Tibial artery (tissue), 4 donors: ENCODE measurements at regions of chr15 and their contacts with region 1.

Region 1: DNA sequence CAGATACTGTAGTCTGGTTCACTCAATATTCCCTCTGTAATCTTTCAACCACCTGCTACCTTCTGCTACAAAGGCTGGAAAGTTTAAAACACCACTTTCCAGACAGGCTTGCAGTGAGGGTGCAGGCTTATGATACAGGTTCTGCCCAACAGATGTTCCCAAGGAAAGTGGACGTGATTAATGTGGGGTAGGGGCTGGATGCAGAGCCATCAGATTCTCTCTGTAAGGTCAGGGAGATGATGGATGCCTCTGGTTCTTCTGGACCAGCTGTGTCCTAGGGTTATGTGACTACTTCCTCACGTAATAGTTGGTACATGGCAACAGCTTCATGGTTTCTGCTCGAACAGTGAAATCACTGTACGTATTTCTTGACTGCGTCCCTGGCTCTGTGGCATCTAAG is 11.1 kb downstream of the GPR176 start:
- DNase-seq: no peak
- H3K4me3 ChIP-seq: no peak overlapping the region
- H3K27ac ChIP-seq: no peak overlapping the region
- H3K4me1 ChIP-seq: peaks cover 0 to 6% (median 0%) of the 10 kb centered on the region in 4 donors
- H3K27me3 ChIP-seq: no peaks in the 10 kb centered on the region
- CTCF ChIP-seq: no peak

Region 2: GRCh38 chr15:39885099-39885777 is 23.8 kb before region 1 on chr15:
- intact Hi-C with region 1: loop called (anchors 1 kb)
- DNase-seq: no peak
- H3K4me3 ChIP-seq: no peak overlapping the region
- H3K27ac ChIP-seq: no peak overlapping the region
- H3K4me1 ChIP-seq: peaks cover 0 to 12% (median 3%) of the 10 kb centered on the region in 4 donors
- H3K27me3 ChIP-seq: no peaks in the 10 kb centered on the region
- CTCF ChIP-seq: no peak

Region 3: DNA sequence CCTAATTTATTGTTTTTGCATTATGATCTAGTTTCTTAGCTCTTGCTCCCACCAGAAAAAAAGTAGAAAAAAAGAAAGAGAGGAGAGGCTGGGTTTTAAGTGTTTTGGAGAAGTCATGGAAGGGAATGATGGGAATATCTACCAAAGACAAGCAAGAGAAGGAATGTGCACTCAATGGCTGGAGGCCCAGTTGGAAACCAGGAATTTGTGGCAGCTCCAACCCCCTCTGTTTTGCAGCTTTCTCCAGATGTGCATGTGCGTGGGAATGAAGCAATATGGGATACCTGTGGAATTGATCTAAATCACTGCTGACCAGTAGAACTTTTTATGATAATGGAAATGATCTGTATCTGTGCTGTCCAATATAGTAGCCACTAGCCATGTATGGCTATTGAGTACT is 52.0 kb after region 1 on chr15:
- intact Hi-C with region 1: no loop called
- DNase-seq: no peak
- H3K4me3 ChIP-seq: no peak overlapping the region
- H3K27ac ChIP-seq: no peak overlapping the region
- H3K4me1 ChIP-seq: no peaks in the 10 kb centered on the region
- H3K27me3 ChIP-seq: no peaks in the 10 kb centered on the region
- CTCF ChIP-seq: no peak